ENCODE measurements at regions of chr10 and their contacts with region 1.

Region 1: GRCh38 chr10:30583778-30584415 is 45.7 kb downstream of the LYZL2 start:
- DNase-seq: peak; percentile 23
- H3K4me3 Mint-ChIP-seq: peak overlapping the region; percentile 57
- H3K27ac Mint-ChIP-seq: no peak overlapping the region
- H3K4me1 Mint-ChIP-seq: peaks cover 14% of the 10 kb centered on the region
- H3K27me3 Mint-ChIP-seq: peaks cover 8% of the 10 kb centered on the region

Region 2: GRCh38 chr10:30359373-30360206 is 224.3 kb before region 1 on chr10:
- CTCF ChIA-PET with region 1: interaction called, 15 read pairs
- POLR2A ChIA-PET with region 1: no interaction called
- DNase-seq: peak; percentile 70
- H3K4me3 Mint-ChIP-seq: no peak overlapping the region
- H3K27ac Mint-ChIP-seq: no peak overlapping the region
- H3K4me1 Mint-ChIP-seq: peaks cover 11% of the 10 kb centered on the region
- H3K27me3 Mint-ChIP-seq: peaks cover 18% of the 10 kb centered on the region

Region 3: DNA sequence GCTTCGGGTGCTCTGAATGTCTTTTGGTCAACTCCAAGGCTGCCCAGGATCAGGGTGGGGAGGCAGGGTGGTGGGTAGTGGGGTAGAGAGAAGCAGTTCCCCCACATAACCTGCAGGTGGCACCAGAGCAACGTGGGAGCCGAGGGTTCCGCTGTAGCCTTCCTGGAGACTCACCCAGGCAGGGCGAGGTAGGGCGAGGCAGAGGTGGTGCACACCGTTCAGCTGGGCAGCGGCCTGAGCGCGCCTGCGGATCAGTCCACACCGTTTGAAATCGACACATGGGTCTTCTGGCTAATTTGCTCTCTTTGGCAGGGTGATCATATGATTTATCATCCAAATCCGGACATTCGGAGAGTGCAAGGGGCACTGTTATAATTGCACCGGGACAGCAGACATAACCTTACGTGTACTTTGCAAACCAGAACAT is 191.3 kb before region 1 on chr10:
- CTCF ChIA-PET with region 1: interaction called, 125 read pairs
- POLR2A ChIA-PET with region 1: no interaction called
- DNase-seq: peak; percentile 80
- H3K4me3 Mint-ChIP-seq: no peak overlapping the region
- H3K27ac Mint-ChIP-seq: no peak overlapping the region
- H3K4me1 Mint-ChIP-seq: peaks cover 9% of the 10 kb centered on the region
- H3K27me3 Mint-ChIP-seq: peaks cover 39% of the 10 kb centered on the region

Region 4: GRCh38 chr10:30534465-30535144 is 49.3 kb before region 1 on chr10:
- CTCF ChIA-PET with region 1: interaction called, 10 read pairs
- POLR2A ChIA-PET with region 1: no interaction called
- DNase-seq: peak; percentile 76
- H3K4me3 Mint-ChIP-seq: no peak overlapping the region
- H3K27ac Mint-ChIP-seq: no peak overlapping the region
- H3K4me1 Mint-ChIP-seq: peaks cover 45% of the 10 kb centered on the region
- H3K27me3 Mint-ChIP-seq: no peaks in the 10 kb centered on the region

Region 5: GRCh38 chr10:30553625-30554439 is 30.1 kb before region 1 on chr10:
- CTCF ChIA-PET with region 1: interaction called, 10 read pairs
- POLR2A ChIA-PET with region 1: no interaction called
- DNase-seq: no peak
- H3K4me3 Mint-ChIP-seq: no peak overlapping the region
- H3K27ac Mint-ChIP-seq: no peak overlapping the region
- H3K4me1 Mint-ChIP-seq: peaks cover 4% of the 10 kb centered on the region
- H3K27me3 Mint-ChIP-seq: peaks cover 4% of the 10 kb centered on the region

Region 6: DNA sequence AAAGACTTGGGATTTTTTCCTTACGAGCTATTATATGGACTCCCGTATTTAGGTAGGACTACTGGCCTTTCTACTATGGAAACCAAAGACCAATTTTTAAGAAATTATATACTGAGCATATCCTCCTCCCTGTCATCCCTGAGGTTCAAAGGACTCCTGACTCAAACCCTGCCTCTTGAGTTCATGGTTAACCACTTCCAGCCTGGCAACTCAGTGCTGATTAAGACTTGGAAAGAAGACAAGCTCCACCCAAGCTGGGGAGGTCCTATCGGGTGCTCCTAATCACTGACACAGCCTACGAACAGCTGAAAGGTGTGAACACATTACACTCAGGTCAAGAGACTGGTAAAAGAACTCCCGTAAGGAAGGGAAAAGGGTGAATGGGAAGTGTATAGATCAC is 21.1 kb before region 1 on chr10:
- CTCF ChIA-PET with region 1: interaction called, 21 read pairs
- POLR2A ChIA-PET with region 1: no interaction called
- DNase-seq: peak; percentile 66
- H3K4me3 Mint-ChIP-seq: no peak overlapping the region
- H3K27ac Mint-ChIP-seq: no peak overlapping the region
- H3K4me1 Mint-ChIP-seq: peaks cover 19% of the 10 kb centered on the region
- H3K27me3 Mint-ChIP-seq: peaks cover 29% of the 10 kb centered on the region

Region 7: GRCh38 chr10:30857803-30858202 is 273.9 kb after region 1 on chr10:
- CTCF ChIA-PET with region 1: no interaction called
- POLR2A ChIA-PET with region 1: no interaction called
- DNase-seq: no peak
- H3K4me3 Mint-ChIP-seq: no peak overlapping the region
- H3K27ac Mint-ChIP-seq: no peak overlapping the region
- H3K4me1 Mint-ChIP-seq: no peaks in the 10 kb centered on the region
- H3K27me3 Mint-ChIP-seq: no peaks in the 10 kb centered on the region

Measured in activated CD4-positive, alpha-beta memory T cell treated with anti-CD3 and anti-CD28 coated beads, Interleukin-2, amount 10 ng/mL, durations not matched to agents 7 days and 5 days (primary cell).